ENCODE measurements at regions of chr17 and their contacts with region 1.

Region 1: GRCh38 chr17:42773290-42774035 is at the start of gene VPS25:
- DNase-seq: peak; percentile 39 to 90 (median 75)
- ATAC-seq: peak; percentile 94
- H3K4me3 ChIP-seq: peak within 1 kb of the TSS; percentile 87 to 99
- H3K4me3 Mint-ChIP-seq: peak within 1 kb of the TSS; percentile 99
- H3K27ac ChIP-seq: peak within 1 kb of the TSS; percentile 89 to 93
- H3K27ac Mint-ChIP-seq: peak within 1 kb of the TSS; percentile 98
- H3K4me1 ChIP-seq: peaks cover 11% of the 10 kb centered on the region
- H3K4me1 Mint-ChIP-seq: peaks cover 28% of the 10 kb centered on the region
- H3K27me3 ChIP-seq: no peaks in the 10 kb centered on the region
- H3K27me3 Mint-ChIP-seq: peaks cover under 1% of the 10 kb centered on the region
- CTCF ChIP-seq: no peak
- total RNA-seq, gene VPS25: 41.0 to 45.1 TPM

Region 2: DNA sequence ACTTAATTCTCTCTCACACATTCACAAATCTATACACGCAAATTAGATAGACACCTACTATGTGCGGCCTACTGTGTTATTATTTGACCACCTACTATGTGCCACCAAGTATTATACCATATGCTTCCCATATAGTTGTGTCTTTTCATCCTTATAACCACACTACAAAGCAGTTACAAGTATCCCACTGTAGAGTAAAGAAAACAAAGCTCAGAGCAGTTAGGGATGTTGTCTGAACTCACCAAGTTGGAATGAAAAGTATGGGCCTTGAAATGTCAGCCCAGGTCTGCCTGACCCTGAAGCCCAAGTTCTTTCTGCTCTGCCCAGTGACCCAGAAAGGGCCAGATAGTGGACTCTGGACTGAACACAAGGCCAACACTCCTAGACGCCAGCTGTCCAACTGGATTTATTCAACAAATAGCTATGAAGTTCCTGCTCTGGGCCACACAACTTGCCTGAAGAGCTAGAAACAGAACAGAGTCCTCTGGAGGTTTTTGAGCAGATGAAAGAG is 1357.6 kb before region 1 on chr17:
- CTCF ChIA-PET with region 1: no interaction called
- POLR2A ChIA-PET with region 1: no interaction called
- intact Hi-C with region 1: no loop called
- DNase-seq: no peak
- ATAC-seq: no peak
- H3K4me3 ChIP-seq: no peak overlapping the region
- H3K4me3 Mint-ChIP-seq: no peak overlapping the region
- H3K27ac ChIP-seq: no peak overlapping the region
- H3K27ac Mint-ChIP-seq: no peak overlapping the region
- H3K4me1 ChIP-seq: peaks cover 7% of the 10 kb centered on the region
- H3K4me1 Mint-ChIP-seq: peaks cover 15% of the 10 kb centered on the region
- H3K27me3 ChIP-seq: no peaks in the 10 kb centered on the region
- H3K27me3 Mint-ChIP-seq: peaks cover 2% of the 10 kb centered on the region
- CTCF ChIP-seq: no peak

Region 3: DNA sequence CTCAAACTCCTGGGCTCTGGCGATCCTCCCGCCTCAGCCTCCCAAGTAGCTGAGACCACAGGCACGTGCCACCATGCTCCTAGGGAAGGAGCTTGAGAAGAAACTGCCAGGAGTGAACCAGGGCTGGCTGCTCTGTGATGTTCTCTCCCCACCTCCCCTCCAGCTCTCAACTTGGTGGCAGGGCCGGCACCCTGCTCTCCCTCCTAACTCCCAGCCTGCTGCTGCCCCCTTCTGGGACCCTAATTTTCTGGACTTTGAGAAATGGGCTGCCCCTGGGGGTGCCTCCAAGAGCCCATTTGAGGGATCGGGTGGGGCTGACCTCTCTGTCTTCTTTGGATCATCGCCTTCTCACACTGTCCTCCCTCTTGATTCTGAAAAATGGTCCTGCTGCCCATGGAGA is 370.3 kb before region 1 on chr17:
- CTCF ChIA-PET with region 1: no interaction called
- POLR2A ChIA-PET with region 1: no interaction called
- intact Hi-C with region 1: no loop called
- DNase-seq: peak in 8 of 9 experiments; percentile 26 to 65 (median 54)
- ATAC-seq: no peak
- H3K4me3 ChIP-seq: no peak overlapping the region
- H3K4me3 Mint-ChIP-seq: no peak overlapping the region
- H3K27ac ChIP-seq: no peak overlapping the region
- H3K27ac Mint-ChIP-seq: no peak overlapping the region
- H3K4me1 ChIP-seq: peaks cover 29% of the 10 kb centered on the region
- H3K4me1 Mint-ChIP-seq: peaks cover 18% of the 10 kb centered on the region
- H3K27me3 ChIP-seq: no peaks in the 10 kb centered on the region
- H3K27me3 Mint-ChIP-seq: no peaks in the 10 kb centered on the region
- CTCF ChIP-seq: peak; percentile 25

Region 4: GRCh38 chr17:42667123-42667951 is 106.1 kb before region 1 on chr17:
- CTCF ChIA-PET with region 1: no interaction called
- POLR2A ChIA-PET with region 1: no interaction called
- intact Hi-C with region 1: no loop called
- DNase-seq: no peak
- ATAC-seq: no peak
- H3K4me3 ChIP-seq: no peak overlapping the region
- H3K4me3 Mint-ChIP-seq: no peak overlapping the region
- H3K27ac ChIP-seq: no peak overlapping the region
- H3K27ac Mint-ChIP-seq: no peak overlapping the region
- H3K4me1 ChIP-seq: peaks cover 16% of the 10 kb centered on the region
- H3K4me1 Mint-ChIP-seq: peaks cover 17% of the 10 kb centered on the region
- H3K27me3 ChIP-seq: peaks cover 12 to 16% of the 10 kb centered on the region in 2 experiments
- H3K27me3 Mint-ChIP-seq: peaks cover 15% of the 10 kb centered on the region
- CTCF ChIP-seq: no peak

Region 5: GRCh38 chr17:42744806-42745617 is 28.5 kb before region 1 on chr17 and contains the start of gene EZH1:
- CTCF ChIA-PET with region 1: no interaction called
- POLR2A ChIA-PET with region 1: interaction called, 4 read pairs
- intact Hi-C with region 1: loop called (anchors 1 kb)
- DNase-seq: peak; percentile 82 to 96 (median 90)
- ATAC-seq: peak; percentile 92
- H3K4me3 ChIP-seq: peak within 1 kb of the TSS; percentile 72 to 73
- H3K4me3 Mint-ChIP-seq: peak within 1 kb of the TSS; percentile 98
- H3K27ac ChIP-seq: peak within 1 kb of the TSS; percentile 62 to 79
- H3K27ac Mint-ChIP-seq: peak within 1 kb of the TSS; percentile 96
- H3K4me1 ChIP-seq: peaks cover 17% of the 10 kb centered on the region
- H3K4me1 Mint-ChIP-seq: peaks cover 31% of the 10 kb centered on the region
- H3K27me3 ChIP-seq: peaks cover 0 to 4% of the 10 kb centered on the region in 2 experiments
- H3K27me3 Mint-ChIP-seq: peaks cover 13% of the 10 kb centered on the region
- CTCF ChIP-seq: no peak
- total RNA-seq, gene EZH1: 59.2 to 63.4 TPM

Region 6: GRCh38 chr17:42760652-42761581 is 12.5 kb before region 1 on chr17 and contains the start of gene RAMP2:
- CTCF ChIA-PET with region 1: interaction called, 13 read pairs
- POLR2A ChIA-PET with region 1: interaction called, 8 read pairs
- intact Hi-C with region 1: no loop called
- DNase-seq: peak in 4 of 9 experiments; percentile 7 to 46 (median 30)
- ATAC-seq: peak; percentile 65
- H3K4me3 ChIP-seq: peak within 1 kb of the TSS in 1 of 2 experiments; percentile 27
- H3K4me3 Mint-ChIP-seq: peak within 1 kb of the TSS; percentile 55
- H3K27ac ChIP-seq: no peak within 1 kb of the TSS
- H3K27ac Mint-ChIP-seq: no peak within 1 kb of the TSS
- H3K4me1 ChIP-seq: peaks cover 9% of the 10 kb centered on the region
- H3K4me1 Mint-ChIP-seq: peaks cover 11% of the 10 kb centered on the region
- H3K27me3 ChIP-seq: peaks cover 26 to 27% of the 10 kb centered on the region in 2 experiments
- H3K27me3 Mint-ChIP-seq: peaks cover 53% of the 10 kb centered on the region
- CTCF ChIP-seq: no peak
- total RNA-seq, gene RAMP2: not detected

Region 7: GRCh38 chr17:42798383-42799380 is 25.2 kb after region 1 on chr17 and contains the starts of genes CNTD1 and COA3:
- CTCF ChIA-PET with region 1: no interaction called
- POLR2A ChIA-PET with region 1: no interaction called
- intact Hi-C with region 1: loop called in 1 of 2 experiments (anchors 2 kb)
- DNase-seq: peak; percentile 52 to 84 (median 77)
- ATAC-seq: peak; percentile 98
- H3K4me3 ChIP-seq: peak within 1 kb of the TSS; percentile 67 to 75
- H3K4me3 Mint-ChIP-seq: peak within 1 kb of the TSS; percentile 93
- H3K27ac ChIP-seq: peak within 1 kb of the TSS in 1 of 2 experiments; percentile 47
- H3K27ac Mint-ChIP-seq: peak within 1 kb of the TSS; percentile 77
- H3K4me1 ChIP-seq: peaks cover 13% of the 10 kb centered on the region
- H3K4me1 Mint-ChIP-seq: peaks cover 28% of the 10 kb centered on the region
- H3K27me3 ChIP-seq: no peaks in the 10 kb centered on the region
- H3K27me3 Mint-ChIP-seq: no peaks in the 10 kb centered on the region
- CTCF ChIP-seq: no peak
- total RNA-seq, gene CNTD1: not detected
- total RNA-seq, gene COA3: 4.0 to 5.6 TPM

Region 8: GRCh38 chr17:42832974-42833766 is 59.7 kb after region 1 on chr17 and contains the start of gene PSME3:
- CTCF ChIA-PET with region 1: no interaction called
- POLR2A ChIA-PET with region 1: no interaction called
- intact Hi-C with region 1: loop called (anchors 1 to 2 kb)
- DNase-seq: peak; percentile 75 to 95 (median 88)
- ATAC-seq: peak; percentile 87
- H3K4me3 ChIP-seq: peak within 1 kb of the TSS; percentile 93 to 100
- H3K4me3 Mint-ChIP-seq: peak within 1 kb of the TSS; percentile 97
- H3K27ac ChIP-seq: peak within 1 kb of the TSS; percentile 95
- H3K27ac Mint-ChIP-seq: peak within 1 kb of the TSS; percentile 99
- H3K4me1 ChIP-seq: peaks cover 17% of the 10 kb centered on the region
- H3K4me1 Mint-ChIP-seq: peaks cover 31% of the 10 kb centered on the region
- H3K27me3 ChIP-seq: no peaks in the 10 kb centered on the region
- H3K27me3 Mint-ChIP-seq: no peaks in the 10 kb centered on the region
- CTCF ChIP-seq: no peak
- total RNA-seq, gene PSME3: 74.1 to 74.2 TPM